GM12878 (cell line): ENCODE measurements at regions of chr9 and their contacts with region 1.

Region 1: DNA sequence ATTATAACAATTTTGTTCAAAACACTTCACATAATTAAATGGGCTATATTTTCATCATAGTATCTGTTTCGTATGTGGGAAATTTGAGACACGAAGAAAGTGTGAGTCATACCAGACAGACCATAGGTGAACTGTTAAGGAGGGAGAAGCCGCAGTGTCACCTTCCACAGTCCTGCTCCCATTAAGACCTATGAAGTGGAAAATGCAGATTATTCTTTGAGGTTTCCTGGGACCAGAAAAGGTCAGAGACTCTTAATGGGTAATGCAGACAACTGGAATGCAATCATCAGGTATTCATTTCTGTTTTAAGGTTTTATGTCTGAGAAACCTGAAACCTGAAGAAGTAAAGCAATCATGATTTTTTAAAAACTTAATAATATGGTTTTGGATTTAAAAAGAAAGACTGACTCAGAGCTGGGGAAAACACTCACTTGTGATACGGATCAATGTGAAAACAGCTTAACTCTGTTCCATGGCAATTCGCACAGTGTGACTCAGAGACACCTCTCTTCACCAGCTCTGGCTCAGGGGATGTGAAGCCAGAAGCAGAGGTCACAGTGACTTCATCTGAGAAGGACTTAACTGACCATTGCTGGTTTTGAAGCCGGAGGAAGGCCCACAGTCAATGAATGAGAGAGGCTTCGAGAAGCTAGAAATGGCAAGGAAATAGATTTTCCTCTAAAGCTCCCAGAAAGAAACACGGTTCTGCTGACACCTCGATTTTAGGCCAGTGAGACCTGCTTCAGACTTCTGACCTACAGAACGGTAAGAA is 17.2 kb upstream of the GCNT1 start:
- DNase-seq: peak; percentile 72
- ATAC-seq: peak; percentile 78
- H3K4me3 ChIP-seq: peak overlapping the region; percentile 10; the same call in 1 of the 2 replicates
- H3K27ac ChIP-seq: peak overlapping the region; percentile 82
- H3K4me1 ChIP-seq: peaks cover 40% of the 10 kb centered on the region
- H3K27me3 ChIP-seq: no peaks in the 10 kb centered on the region
- CTCF ChIP-seq: no peak
- EP300 ChIP-seq: peak; percentile 71 to 80
- POLR2A ChIP-seq: no peak
- RAD21 ChIP-seq: no peak

Region 2: GRCh38 chr9:76269818-76270217 is 171.9 kb before region 1 on chr9:
- CTCF ChIA-PET with region 1: no interaction called
- POLR2A ChIA-PET with region 1: no interaction called
- RAD21 ChIA-PET with region 1: no interaction called
- SMC1A ChIA-PET with region 1: no interaction called
- in situ Hi-C with region 1: no loop called
- intact Hi-C with region 1: no loop called
- DNase-seq: no peak
- ATAC-seq: no peak
- H3K4me3 ChIP-seq: no peak overlapping the region
- H3K27ac ChIP-seq: no peak overlapping the region
- H3K4me1 ChIP-seq: no peaks in the 10 kb centered on the region
- H3K27me3 ChIP-seq: no peaks in the 10 kb centered on the region
- CTCF ChIP-seq: no peak
- EP300 ChIP-seq: no peak
- POLR2A ChIP-seq: no peak
- RAD21 ChIP-seq: no peak

Region 3: DNA sequence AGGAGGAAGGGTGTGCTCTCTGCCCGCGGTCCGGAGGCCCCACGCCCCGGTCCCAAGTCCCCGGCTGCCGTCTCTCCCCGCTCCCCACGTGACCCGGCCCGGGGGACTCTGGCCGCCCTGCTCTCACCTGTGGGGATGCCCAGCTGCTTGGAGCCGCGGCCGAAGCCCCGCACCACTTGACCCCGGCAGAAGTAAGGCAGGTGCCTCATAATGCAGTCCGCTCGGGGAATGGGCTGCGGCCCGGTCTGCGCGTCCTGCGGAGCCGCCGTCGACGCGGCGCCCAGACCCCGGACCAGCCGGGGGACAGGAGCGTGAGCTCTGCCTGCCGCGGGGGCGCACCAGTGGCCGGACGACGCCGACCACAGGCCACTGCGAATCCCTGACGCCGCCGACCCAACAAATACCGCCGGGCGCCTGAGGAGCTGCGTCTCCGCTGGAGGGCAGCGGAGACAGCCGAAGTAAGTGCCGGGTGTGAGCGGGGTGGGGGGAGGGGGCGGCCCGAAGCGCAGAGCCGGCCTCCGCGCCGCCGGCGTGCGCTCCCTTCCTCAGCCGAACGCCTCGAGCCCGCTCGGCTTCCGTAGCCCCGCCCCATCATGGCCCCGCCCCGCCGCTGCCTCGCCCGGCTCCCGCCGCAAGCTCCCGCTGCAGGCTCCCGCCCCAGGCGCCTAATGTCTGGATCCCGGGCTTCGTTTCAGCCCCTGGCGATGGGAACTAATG is 47.6 kb before region 1 on chr9 and contains the start of gene RFK:
- CTCF ChIA-PET with region 1: interaction called, 15 read pairs
- POLR2A ChIA-PET with region 1: interaction called, 8 read pairs
- RAD21 ChIA-PET with region 1: interaction called, 13 read pairs
- SMC1A ChIA-PET with region 1: interaction called, 19 read pairs
- in situ Hi-C with region 1: no loop called
- intact Hi-C with region 1: no loop called
- DNase-seq: peak; percentile 48
- ATAC-seq: peak; percentile 89
- H3K4me3 ChIP-seq: peak within 1 kb of the TSS; percentile 94
- H3K27ac ChIP-seq: peak within 1 kb of the TSS; percentile 54
- H3K4me1 ChIP-seq: peaks cover 4% of the 10 kb centered on the region; the same call in 1 of the 2 replicates
- H3K27me3 ChIP-seq: no peaks in the 10 kb centered on the region
- CTCF ChIP-seq: peak; percentile 42 to 64 (median 46); a peak in 4 of 6 replicates
- EP300 ChIP-seq: no peak
- POLR2A ChIP-seq: peak; percentile 81
- RAD21 ChIP-seq: peak; percentile 62
- polyA plus RNA-seq, gene RFK: 4.4 to 7.9 TPM

Region 4: DNA sequence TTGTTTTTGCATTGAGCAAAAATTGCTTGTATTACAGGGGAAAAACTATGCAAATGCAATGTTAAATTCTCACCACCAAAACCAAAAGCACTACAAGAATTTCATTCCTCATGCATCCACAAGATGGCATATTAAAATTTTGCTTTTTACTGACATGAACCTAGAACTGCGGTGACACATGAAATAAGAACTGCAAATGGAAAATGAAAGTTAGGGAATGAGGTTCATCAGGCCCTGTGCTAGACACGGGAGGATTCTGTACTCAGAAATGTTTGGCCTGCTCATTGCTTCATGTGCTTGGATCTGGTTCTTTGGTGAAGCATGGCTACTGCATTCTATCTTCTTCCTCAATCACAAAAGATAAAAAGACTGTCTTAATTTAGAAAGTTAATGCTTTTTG is 38.4 kb before region 1 on chr9:
- CTCF ChIA-PET with region 1: interaction called, 6 read pairs
- POLR2A ChIA-PET with region 1: no interaction called
- RAD21 ChIA-PET with region 1: interaction called, 5 read pairs
- SMC1A ChIA-PET with region 1: interaction called, 9 read pairs
- in situ Hi-C with region 1: no loop called
- intact Hi-C with region 1: loop called (anchors 1 kb)
- DNase-seq: peak; percentile 55
- ATAC-seq: peak; percentile 88
- H3K4me3 ChIP-seq: no peak overlapping the region; the same call in 1 of the 2 replicates
- H3K27ac ChIP-seq: no peak overlapping the region
- H3K4me1 ChIP-seq: peaks cover 10% of the 10 kb centered on the region
- H3K27me3 ChIP-seq: no peaks in the 10 kb centered on the region
- CTCF ChIP-seq: peak; percentile 33 to 63 (median 56); a peak in 5 of 6 replicates
- EP300 ChIP-seq: no peak
- POLR2A ChIP-seq: no peak
- RAD21 ChIP-seq: peak; percentile 74

Region 5: DNA sequence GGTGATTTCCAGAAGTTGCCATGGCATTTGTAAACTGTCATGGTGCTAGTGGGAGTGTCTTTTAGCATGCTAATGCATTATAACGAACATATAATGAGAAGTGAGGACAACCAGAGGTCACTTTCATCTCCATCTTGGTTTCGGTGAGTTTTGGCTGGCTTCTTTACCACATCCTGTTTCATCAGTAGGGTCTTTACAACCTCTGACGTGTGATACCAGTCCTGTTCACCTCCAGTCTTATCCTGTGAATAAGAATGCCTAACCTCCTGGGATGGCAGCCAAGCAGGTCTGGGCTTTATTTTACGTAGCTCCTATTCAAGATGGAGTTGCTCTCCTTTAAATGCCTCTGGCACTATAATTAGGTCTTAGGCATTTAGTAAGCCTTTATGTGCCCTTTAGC is 27.1 kb before region 1 on chr9:
- CTCF ChIA-PET with region 1: interaction called, 3 read pairs
- POLR2A ChIA-PET with region 1: no interaction called
- RAD21 ChIA-PET with region 1: no interaction called
- SMC1A ChIA-PET with region 1: no interaction called
- in situ Hi-C with region 1: no loop called
- intact Hi-C with region 1: loop called (anchors 2 kb)
- DNase-seq: peak; percentile 48
- ATAC-seq: peak; percentile 88
- H3K4me3 ChIP-seq: no peak overlapping the region
- H3K27ac ChIP-seq: no peak overlapping the region
- H3K4me1 ChIP-seq: peaks cover 13% of the 10 kb centered on the region; the same call in 1 of the 2 replicates
- H3K27me3 ChIP-seq: no peaks in the 10 kb centered on the region
- CTCF ChIP-seq: no peak
- EP300 ChIP-seq: no peak; a peak in 1 of 4 replicates
- POLR2A ChIP-seq: no peak
- RAD21 ChIP-seq: no peak

Region 6: DNA sequence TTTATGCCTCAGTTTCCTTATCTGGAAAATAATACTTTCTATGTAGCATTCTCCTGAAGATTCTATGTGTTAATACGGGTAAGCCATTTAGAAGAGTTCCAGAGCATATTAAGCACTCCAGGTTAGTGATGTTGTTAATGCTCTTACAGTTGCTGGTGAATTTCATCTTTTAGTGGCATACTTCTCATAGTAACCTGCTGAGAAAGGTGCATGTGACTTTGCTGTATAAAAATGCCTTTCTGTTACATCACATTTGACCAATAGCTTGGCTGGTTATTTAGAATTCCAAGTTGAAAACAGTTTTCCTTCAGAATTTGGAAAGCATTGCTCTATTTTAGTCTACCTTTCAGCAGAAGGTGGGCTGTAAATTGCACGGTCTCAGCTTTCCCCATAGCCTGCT is 44.4 kb after region 1 on chr9:
- CTCF ChIA-PET with region 1: no interaction called
- POLR2A ChIA-PET with region 1: no interaction called
- RAD21 ChIA-PET with region 1: no interaction called
- SMC1A ChIA-PET with region 1: no interaction called
- in situ Hi-C with region 1: no loop called
- intact Hi-C with region 1: no loop called
- DNase-seq: no peak
- ATAC-seq: no peak
- H3K4me3 ChIP-seq: no peak overlapping the region
- H3K27ac ChIP-seq: no peak overlapping the region
- H3K4me1 ChIP-seq: no peaks in the 10 kb centered on the region; the same call in 1 of the 2 replicates
- H3K27me3 ChIP-seq: no peaks in the 10 kb centered on the region
- CTCF ChIP-seq: no peak
- EP300 ChIP-seq: no peak
- POLR2A ChIP-seq: no peak
- RAD21 ChIP-seq: no peak